ENCODE measurements at regions of chr9 and their contacts with region 1.

Region 1: GRCh38 chr9:20043035-20043434 is 254.2 kb upstream of the SLC24A2 start:
- DNase-seq: no peak
- ATAC-seq: peak; percentile 80
- H3K4me3 ChIP-seq: peak overlapping the region; percentile 30; the same call in 1 of the 2 replicates
- H3K27ac ChIP-seq: no peak overlapping the region
- H3K4me1 ChIP-seq: peaks cover 4% of the 10 kb centered on the region; the same call in 1 of the 2 replicates
- H3K27me3 ChIP-seq: no peaks in the 10 kb centered on the region
- CTCF ChIP-seq: no peak
- EP300 ChIP-seq: no peak
- POLR2A ChIP-seq: no peak
- RAD21 ChIP-seq: no peak

Region 2: GRCh38 chr9:19999491-20000057 is 43.5 kb before region 1 on chr9:
- CTCF ChIA-PET with region 1: no interaction called
- POLR2A ChIA-PET with region 1: interaction called, 3 read pairs
- RAD21 ChIA-PET with region 1: no interaction called
- SMC1A ChIA-PET with region 1: interaction called, 7 read pairs
- in situ Hi-C with region 1: no loop called
- intact Hi-C with region 1: loop called (anchors 2 kb)
- DNase-seq: peak; percentile 92
- ATAC-seq: peak; percentile 92
- H3K4me3 ChIP-seq: no peak overlapping the region
- H3K27ac ChIP-seq: peak overlapping the region; percentile 59
- H3K4me1 ChIP-seq: peaks cover 18% of the 10 kb centered on the region
- H3K27me3 ChIP-seq: no peaks in the 10 kb centered on the region
- CTCF ChIP-seq: no peak
- EP300 ChIP-seq: peak; percentile 70 to 81; a peak in 2 of 4 replicates
- POLR2A ChIP-seq: no peak
- RAD21 ChIP-seq: no peak

Region 3: DNA sequence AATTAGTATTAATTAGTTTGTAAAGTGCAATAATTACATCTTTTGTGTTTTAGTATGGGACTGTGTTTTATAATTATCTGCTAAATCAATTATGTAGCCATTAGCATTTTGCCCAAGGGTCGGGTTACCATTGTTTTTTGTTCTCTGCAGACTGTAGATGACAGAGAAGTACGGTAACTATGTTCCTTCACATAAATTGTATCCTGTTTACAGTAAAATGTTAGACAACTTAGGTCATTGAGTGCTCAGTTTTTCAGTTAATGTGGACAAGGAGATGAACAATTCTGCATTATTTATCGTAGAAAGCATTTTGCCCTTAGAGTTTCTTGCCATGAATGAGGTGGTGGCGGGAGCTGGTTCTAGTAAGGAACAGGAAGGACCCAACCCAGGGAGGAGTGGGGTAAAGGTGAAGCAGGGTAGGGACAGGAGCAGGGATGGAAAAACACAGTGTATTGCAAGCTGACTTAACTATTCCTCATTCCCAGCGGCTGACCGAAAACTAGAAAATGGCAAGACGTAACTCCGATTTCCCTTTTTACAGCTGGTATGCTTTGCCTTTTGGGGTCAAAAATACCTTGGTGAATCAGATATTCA is 10.5 kb before region 1 on chr9:
- CTCF ChIA-PET with region 1: no interaction called
- POLR2A ChIA-PET with region 1: no interaction called
- RAD21 ChIA-PET with region 1: no interaction called
- SMC1A ChIA-PET with region 1: no interaction called
- in situ Hi-C with region 1: no loop called
- intact Hi-C with region 1: no loop called
- DNase-seq: no peak
- ATAC-seq: no peak
- H3K4me3 ChIP-seq: no peak overlapping the region
- H3K27ac ChIP-seq: no peak overlapping the region
- H3K4me1 ChIP-seq: no peaks in the 10 kb centered on the region
- H3K27me3 ChIP-seq: no peaks in the 10 kb centered on the region
- CTCF ChIP-seq: no peak
- EP300 ChIP-seq: no peak
- POLR2A ChIP-seq: no peak
- RAD21 ChIP-seq: no peak